ENCODE measurements at regions of chr10 and their contacts with region 1.

Region 1: DNA sequence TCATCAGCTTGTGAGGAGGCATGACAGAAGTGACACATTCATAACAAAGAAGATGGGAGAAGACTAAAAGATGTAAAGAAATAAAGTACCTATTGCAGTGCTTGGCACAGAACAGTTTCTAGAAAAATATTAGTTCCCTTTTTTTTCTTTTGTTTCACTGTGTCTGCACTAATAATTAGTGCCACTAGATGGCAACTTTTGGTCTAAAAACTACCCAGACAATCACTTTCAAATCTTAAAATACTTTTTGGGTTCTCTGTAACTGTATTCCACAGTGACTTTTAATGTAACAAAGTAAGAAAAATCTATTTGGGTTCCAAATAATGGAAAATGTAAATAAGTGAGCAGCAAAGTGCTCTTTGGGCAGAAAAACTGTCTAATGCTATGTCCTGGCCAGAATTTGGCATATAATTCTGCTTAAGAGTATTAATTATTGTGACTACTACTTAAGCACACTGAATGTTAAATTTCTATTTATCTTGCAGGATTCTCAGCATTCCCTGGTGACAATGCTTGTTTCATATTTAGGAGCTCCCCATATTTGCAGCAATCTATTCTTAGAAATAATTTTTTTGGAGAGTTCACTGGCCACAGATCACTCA is 134.8 kb upstream of the KIF5B start:
- DNase-seq: no peak
- H3K4me3 ChIP-seq: no peak overlapping the region
- H3K27ac ChIP-seq: no peak overlapping the region
- H3K4me1 ChIP-seq: no peaks in the 10 kb centered on the region
- H3K27me3 ChIP-seq: no peaks in the 10 kb centered on the region
- CTCF ChIP-seq: peak; percentile 44 to 75 (median 70)
- POLR2A ChIP-seq: no peak

Region 2: GRCh38 chr10:32367793-32368453 is 176.9 kb after region 1 on chr10:
- intact Hi-C with region 1: loop called (anchors 10 kb)
- DNase-seq: peak; percentile 62 to 76
- H3K4me3 ChIP-seq: no peak overlapping the region
- H3K27ac ChIP-seq: peak overlapping the region in 1 of 3 donors; percentile 47
- H3K4me1 ChIP-seq: peaks cover 7 to 29% of the 10 kb centered on the region in 2 donors
- H3K27me3 ChIP-seq: no peaks in the 10 kb centered on the region
- CTCF ChIP-seq: peak; percentile 47 to 84 (median 70)
- POLR2A ChIP-seq: no peak